Panc1 (cell line): ENCODE measurements at regions of chr11 and their contacts with region 1.

Region 1: DNA sequence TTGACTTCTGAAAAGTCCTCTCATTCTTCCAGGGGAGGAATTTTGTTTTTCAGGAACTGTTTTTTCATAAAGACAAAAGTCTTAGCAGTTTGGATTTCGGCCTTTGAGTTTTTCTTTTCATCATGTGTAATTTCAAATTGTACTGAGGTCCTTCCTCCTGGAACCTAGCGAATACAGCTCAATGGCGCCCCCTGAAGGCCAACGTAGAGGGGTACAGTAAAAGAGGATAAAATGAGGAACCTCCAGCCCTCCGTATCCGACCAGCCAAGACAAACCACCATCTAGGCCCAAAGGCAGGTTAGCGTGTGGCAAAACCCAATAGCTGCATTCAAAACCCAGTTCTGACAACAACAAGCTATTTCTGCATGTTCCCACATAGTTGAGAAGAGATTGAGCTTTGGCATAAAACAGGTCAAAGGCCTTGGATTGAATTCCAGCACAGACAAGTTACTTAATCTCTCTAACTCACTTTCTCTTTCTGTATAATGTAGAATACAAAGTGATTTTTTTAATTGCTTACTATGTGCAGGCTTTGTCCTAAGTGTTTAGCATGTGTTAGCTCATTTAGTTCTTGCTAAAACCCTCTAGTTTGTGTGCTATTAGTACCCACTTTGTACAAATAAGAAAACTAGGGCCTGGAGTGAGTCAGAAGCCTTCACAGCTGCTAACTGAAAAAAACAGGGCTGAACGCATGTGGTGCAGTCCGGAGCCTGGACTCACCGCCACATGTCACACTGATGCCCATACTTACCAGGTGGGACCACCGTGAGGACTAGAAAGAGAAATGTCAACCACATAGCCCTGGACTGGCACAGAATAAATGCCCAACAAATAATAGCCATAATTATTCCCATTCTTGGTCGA is 43.2 kb upstream of the ETS1 start:
- DNase-seq: peak; percentile 75
- ATAC-seq: peak; percentile 94
- H3K4me3 ChIP-seq: no peak overlapping the region
- H3K27ac ChIP-seq: no peak overlapping the region
- H3K4me1 ChIP-seq: no peaks in the 10 kb centered on the region
- H3K27me3 ChIP-seq: no peaks in the 10 kb centered on the region
- CTCF ChIP-seq: peak; percentile 91

Region 2: DNA sequence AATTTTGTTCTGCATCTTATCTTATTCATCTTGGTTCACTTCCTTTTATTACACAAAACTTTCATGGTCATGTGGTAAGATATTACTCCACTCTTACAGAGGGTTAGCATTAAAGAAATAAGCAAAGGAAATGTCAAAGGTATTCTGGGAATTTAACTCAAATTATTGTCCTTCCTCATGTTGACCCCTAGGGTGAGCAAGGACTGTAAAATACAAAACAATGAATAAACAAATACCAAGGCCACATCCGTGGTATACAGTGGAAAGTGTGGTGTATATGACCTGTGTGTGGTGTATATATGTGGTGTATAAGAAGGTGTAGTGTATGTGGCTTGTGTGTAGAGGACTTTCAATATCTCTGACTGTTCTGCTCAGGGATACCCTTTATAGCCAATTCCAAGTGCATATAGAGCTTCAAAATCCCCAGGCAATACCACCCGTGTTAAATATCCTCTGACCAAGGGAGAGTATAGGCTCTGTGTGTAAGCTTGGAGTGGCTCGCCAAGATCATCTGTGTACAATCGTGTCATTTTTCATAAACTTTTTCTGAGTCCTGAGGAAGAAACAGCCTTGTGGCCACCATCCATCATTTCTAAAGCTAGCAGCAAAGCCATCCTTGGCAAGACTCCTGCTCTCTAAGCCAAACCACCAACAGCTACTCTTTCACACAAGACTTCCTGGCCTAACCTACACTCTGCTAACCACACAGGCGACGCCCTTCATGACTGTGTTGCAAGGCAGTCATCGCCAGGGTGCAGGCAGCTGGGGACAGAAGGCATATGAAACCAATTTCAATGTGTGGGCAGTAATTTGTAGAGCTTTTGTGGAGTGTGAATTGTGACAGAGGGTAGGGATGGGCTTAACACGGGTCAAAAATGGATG is 591.2 kb before region 1 on chr11:
- CTCF ChIA-PET with region 1: interaction called, 4 read pairs
- POLR2A ChIA-PET with region 1: no interaction called
- in situ Hi-C with region 1: no loop called
- intact Hi-C with region 1: loop called (anchors 2 kb)
- DNase-seq: no peak
- ATAC-seq: 0 out of 2 replicates have a peak, but pooled peaks have one; percentile 48
- H3K4me3 ChIP-seq: no peak overlapping the region
- H3K27ac ChIP-seq: no peak overlapping the region
- H3K4me1 ChIP-seq: no peaks in the 10 kb centered on the region; the same call in 1 of the 2 replicates
- H3K27me3 ChIP-seq: no peaks in the 10 kb centered on the region; the same call in 1 of the 2 replicates
- CTCF ChIP-seq: no peak; the same call in 1 of the 2 replicates

Region 3: GRCh38 chr11:128157423-128158298 is 472.9 kb before region 1 on chr11:
- CTCF ChIA-PET with region 1: interaction called, 3 read pairs
- POLR2A ChIA-PET with region 1: no interaction called
- in situ Hi-C with region 1: no loop called
- intact Hi-C with region 1: loop called (anchors 5 kb)
- DNase-seq: peak; percentile 81
- ATAC-seq: peak; percentile 95
- H3K4me3 ChIP-seq: peak overlapping the region in 1 of 2 experiments; percentile 24; a peak in 2 of 4 replicates
- H3K27ac ChIP-seq: no peak overlapping the region
- H3K4me1 ChIP-seq: no peaks in the 10 kb centered on the region
- H3K27me3 ChIP-seq: peaks cover 7% of the 10 kb centered on the region; the same call in 1 of the 2 replicates
- CTCF ChIP-seq: peak; percentile 97

Region 4: DNA sequence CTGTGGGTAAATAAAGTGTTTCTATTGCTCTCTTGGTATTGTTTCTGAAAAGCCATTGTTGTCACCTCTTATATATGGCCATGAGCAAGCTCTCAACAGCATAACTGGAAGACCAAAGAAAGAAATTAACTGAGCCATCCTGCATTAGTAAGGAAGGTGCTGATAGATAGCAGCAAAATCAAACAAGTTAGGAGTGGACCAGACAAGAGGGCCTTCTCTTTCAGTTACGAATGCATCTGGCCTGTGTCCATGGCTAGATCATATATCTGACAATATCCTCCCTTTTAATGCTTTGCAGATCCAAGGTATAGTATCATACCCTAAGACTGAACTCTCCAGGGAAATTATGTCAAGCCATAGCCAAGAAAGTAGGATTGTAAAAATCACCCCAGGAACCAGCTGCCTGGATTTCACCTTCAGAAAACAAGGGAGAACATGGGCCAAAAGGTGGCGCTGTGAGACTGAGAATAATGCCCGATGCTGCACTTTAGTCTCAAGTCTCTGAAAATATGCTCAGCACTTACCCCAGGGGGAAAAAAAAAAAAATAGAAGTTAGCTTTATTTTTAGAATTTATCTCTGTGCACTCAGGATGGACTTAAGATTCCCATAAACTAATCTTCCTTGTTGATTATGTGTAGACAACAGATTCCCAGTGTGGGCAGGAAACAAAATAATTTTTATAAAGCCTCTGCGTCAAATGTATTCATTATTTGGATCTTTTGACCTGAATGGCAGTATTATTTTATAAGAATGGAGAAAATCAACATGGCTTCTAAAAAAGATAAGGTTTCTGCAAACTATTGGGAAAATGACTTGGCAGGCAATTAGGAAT is 458.3 kb before region 1 on chr11:
- CTCF ChIA-PET with region 1: interaction called, 7 read pairs
- POLR2A ChIA-PET with region 1: no interaction called
- in situ Hi-C with region 1: no loop called
- intact Hi-C with region 1: loop called (anchors 1 kb)
- DNase-seq: peak; percentile 89
- ATAC-seq: peak; percentile 96
- H3K4me3 ChIP-seq: no peak overlapping the region
- H3K27ac ChIP-seq: peak overlapping the region; percentile 49
- H3K4me1 ChIP-seq: 0 out of 2 replicates have a peak, but pooled peaks cover 6% of the 10 kb centered on the region
- H3K27me3 ChIP-seq: no peaks in the 10 kb centered on the region
- CTCF ChIP-seq: peak; percentile 86

Region 5: DNA sequence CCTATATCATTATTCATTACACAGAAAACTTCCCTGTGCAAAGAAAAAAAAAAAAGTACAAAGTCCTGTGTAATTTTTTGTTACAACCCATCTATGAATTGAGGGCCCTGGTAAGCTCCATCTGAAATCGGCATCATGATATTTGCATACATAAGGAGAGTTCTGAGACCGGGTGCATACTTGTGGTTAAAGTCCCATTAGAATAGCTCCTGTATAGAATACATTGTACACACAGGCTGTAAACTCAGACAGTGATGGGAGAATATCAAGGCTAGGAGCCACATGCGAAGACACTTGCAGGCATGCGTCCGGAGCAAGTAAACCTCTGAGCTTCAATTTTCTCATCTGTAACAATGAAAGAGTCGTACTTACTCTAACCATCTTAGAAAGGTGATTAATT is 396.5 kb before region 1 on chr11:
- CTCF ChIA-PET with region 1: no interaction called
- POLR2A ChIA-PET with region 1: interaction called, 12 read pairs
- in situ Hi-C with region 1: no loop called
- intact Hi-C with region 1: no loop called
- DNase-seq: no peak
- ATAC-seq: no peak
- H3K4me3 ChIP-seq: no peak overlapping the region
- H3K27ac ChIP-seq: no peak overlapping the region
- H3K4me1 ChIP-seq: no peaks in the 10 kb centered on the region
- H3K27me3 ChIP-seq: no peaks in the 10 kb centered on the region
- CTCF ChIP-seq: no peak

Region 6: GRCh38 chr11:128290106-128290840 is 340.3 kb before region 1 on chr11:
- CTCF ChIA-PET with region 1: interaction called, 4 read pairs
- POLR2A ChIA-PET with region 1: no interaction called
- in situ Hi-C with region 1: no loop called
- intact Hi-C with region 1: loop called (anchors 1 kb)
- DNase-seq: peak; percentile 68
- ATAC-seq: peak; percentile 96
- H3K4me3 ChIP-seq: no peak overlapping the region
- H3K27ac ChIP-seq: no peak overlapping the region
- H3K4me1 ChIP-seq: no peaks in the 10 kb centered on the region
- H3K27me3 ChIP-seq: no peaks in the 10 kb centered on the region
- CTCF ChIP-seq: peak; percentile 89

Region 7: DNA sequence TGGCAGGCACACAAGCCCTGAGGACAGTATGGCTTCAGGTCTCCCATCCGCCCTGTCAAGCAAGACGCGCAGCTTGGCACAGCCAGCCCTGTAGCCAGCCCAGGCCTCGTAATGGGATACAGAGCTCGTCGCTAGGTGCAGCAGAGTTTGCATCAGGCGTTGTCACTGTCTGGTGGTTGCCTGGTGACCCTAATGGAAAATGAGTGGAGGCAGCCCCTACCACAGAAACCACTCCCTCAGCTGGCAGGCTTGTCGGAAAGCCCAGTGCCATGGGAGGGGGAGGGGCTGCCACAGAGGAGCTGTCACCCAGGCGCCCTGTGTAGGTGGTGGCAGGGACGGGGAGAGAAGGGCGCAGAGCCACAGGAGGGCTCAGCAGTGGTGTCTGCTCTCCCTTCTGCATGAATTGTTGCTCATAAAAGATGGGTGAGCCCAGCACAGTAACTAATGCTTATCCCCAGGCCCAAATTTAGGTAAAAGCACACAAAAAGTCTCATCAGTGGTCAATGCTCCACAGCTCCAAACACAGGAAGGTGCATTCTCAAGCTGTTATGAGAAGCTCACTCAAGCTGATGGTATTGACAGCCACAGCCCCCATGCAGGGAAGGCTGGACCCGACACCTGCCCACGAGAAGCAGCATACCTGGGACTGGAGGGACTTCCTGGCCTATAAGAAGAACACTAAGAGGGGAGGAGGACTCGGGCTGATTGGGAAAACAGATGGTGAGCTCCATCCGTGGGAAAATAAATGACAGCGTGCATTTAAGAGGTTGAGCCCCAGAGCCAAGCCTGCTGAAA is 207.8 kb before region 1 on chr11:
- CTCF ChIA-PET with region 1: no interaction called
- POLR2A ChIA-PET with region 1: no interaction called
- in situ Hi-C with region 1: no loop called
- intact Hi-C with region 1: no loop called
- DNase-seq: no peak
- ATAC-seq: no peak
- H3K4me3 ChIP-seq: no peak overlapping the region
- H3K27ac ChIP-seq: no peak overlapping the region
- H3K4me1 ChIP-seq: no peaks in the 10 kb centered on the region
- H3K27me3 ChIP-seq: no peaks in the 10 kb centered on the region
- CTCF ChIP-seq: no peak

Region 8: DNA sequence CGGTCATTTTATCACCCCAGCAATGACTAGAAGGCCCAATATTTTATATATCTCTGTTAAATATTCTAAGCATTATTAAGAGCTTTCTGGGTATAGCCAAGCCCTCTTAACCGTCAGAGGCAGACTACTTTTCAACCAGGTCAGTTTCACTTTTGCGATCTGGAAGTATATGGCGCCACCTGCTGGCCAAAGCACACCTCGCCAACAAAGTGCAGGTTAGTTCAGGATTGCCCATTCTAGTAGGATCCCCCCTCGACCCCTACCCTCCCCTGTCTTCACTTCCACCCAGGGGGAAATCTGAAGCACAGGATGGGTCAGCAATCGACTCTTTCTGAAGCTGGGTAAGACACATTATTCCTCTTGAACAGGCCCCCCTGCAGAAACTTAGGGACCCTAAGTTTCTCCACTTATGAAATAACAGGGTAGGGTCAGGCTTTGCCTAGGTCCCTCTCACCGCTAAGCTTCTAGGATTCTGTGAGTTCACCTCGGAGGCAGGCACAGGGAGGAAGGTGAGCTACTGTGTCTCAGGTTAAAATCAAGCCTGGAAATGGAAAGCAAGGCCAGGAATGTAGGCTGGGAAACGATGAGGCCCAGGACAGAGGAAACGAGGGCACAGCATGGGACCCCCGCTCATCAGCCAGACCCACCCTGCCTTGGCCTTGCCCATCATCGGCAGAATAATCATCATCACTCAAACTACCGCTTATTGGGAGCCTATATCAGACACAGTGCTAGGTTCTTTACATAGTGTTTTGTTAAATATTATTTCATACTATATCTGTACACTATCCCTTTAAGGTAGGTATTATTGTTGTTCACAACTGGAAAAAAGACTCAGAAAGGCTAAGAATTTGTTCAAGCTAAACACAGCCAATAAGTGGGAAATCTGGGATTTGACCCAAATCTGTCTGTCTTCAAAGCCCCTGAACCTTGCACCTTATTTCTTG is 200.8 kb after region 1 on chr11:
- CTCF ChIA-PET with region 1: interaction called, 6 read pairs
- POLR2A ChIA-PET with region 1: no interaction called
- in situ Hi-C with region 1: no loop called
- intact Hi-C with region 1: loop called (anchors 1 kb)
- DNase-seq: peak; percentile 74
- ATAC-seq: peak; percentile 94
- H3K4me3 ChIP-seq: peak overlapping the region in 1 of 2 experiments; percentile 34; a peak in 1 of 4 replicates
- H3K27ac ChIP-seq: peak overlapping the region; percentile 69
- H3K4me1 ChIP-seq: no peaks in the 10 kb centered on the region
- H3K27me3 ChIP-seq: peaks cover 2% of the 10 kb centered on the region; the same call in 1 of the 2 replicates
- CTCF ChIP-seq: peak; percentile 94